Activated T-helper 1 cell treated with anti-CD3 and anti-CD28 coated beads, Interleukin-12 subunit alpha, Interleukin-12 subunit beta, Interleukin-2, Interleukin-4 antibody, amounts not matched to agents 30 ng/mL and 10 ng/mL and 1 ng/mL, durations not matched to agents 14 hours and 24 hours and 36 hours (primary cell): ENCODE measurements at regions of chr10 and their contacts with region 1.

Region 1: GRCh38 chr10:73625884-73626752 is 15.2 kb downstream of the MYOZ1 start:
- DNase-seq: peak; percentile 90
- H3K4me3 Mint-ChIP-seq: peak overlapping the region; percentile 94
- H3K27ac Mint-ChIP-seq: peak overlapping the region; percentile 95
- H3K4me1 Mint-ChIP-seq: peaks cover 17% of the 10 kb centered on the region
- H3K27me3 Mint-ChIP-seq: no peaks in the 10 kb centered on the region

Region 2: DNA sequence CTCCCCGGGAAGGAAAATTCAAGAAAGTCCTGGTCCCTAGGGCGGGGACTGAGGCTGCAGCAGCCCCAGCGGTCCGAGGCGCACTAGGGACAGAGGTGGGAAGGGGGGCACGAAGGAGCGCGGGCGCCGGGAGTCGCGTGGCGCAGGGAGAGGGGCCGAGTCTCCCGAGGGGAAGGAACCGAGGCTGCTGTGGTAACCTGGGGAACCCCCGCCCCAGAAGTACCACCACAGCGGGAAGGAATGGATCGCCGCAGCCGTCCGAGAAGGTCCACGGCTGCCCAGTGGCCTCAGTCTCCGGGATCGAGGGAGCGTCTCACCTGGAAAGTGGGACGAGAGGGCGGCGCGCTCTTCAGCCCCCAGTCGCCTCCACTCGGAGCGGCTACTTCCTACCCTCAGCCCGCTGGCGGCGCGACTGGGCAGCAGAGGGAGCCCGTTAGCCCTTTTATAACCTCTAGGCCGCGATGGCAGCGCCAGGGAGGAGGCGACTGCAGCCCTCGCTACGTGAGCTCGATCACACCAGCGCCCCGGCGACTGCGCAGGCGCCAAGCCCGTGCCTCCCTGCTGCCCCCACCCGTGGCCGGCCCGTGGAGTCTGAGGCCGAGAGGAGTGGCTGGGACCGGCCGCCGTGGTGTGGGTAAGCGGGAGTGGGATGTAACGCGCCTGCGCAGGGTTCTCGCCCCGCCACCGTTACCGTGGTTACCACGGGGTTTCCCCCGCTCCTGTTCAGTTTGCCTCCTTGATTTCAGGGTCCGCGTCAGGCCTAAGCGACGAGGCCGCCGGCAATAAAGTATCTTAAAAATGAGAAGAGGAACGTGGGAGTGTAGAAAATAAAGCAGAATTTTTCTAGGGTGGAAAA is 529.4 kb before region 1 on chr10 and contains the start of gene P4HA1:
- intact Hi-C with region 1: loop called (anchors 1 kb)
- DNase-seq: peak; percentile 97
- H3K4me3 Mint-ChIP-seq: peak within 1 kb of the TSS; percentile 96
- H3K27ac Mint-ChIP-seq: peak within 1 kb of the TSS; percentile 94
- H3K4me1 Mint-ChIP-seq: peaks cover 46% of the 10 kb centered on the region
- H3K27me3 Mint-ChIP-seq: peaks cover 2% of the 10 kb centered on the region
- total RNA-seq, gene P4HA1: 52.8 and 54.5 TPM in 2 replicates

Region 3: DNA sequence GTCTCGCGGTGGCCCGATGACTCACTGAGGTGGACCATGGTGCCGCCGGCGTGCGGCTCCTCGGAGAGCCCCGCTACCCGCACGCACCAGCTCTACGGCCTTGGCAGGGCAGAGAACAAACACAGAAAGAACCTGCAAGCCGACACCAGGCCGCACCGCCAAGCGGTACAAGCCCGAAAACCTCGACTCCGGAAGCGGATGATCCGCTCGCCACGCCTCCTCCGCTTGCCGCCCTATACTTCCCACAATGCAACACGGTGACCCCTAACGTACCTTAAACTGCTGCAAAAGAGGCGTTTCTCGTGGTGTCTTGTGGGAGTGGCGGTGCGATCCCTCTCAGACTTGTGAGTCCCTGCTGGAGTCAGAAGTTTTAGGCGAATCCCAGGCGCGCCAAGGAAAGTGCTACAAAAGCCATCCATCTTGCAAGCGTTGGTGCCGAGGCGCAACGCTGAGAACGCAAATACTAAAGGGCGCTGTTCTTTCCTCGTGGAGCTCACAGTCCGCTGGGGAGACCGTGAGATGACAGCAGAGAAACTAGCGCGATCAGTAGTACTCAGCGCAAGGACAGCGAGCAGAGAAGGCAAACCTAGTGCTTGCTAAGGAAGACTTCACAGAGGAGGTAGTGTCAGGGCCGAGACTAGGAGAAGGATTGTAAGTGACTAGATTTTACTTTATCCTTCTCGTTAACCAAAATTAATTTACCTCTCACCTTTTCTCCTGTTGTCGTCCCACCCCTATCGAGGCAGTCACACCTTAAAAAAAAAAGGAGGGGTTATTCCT is 373.5 kb before region 1 on chr10 and contains the start of gene MRPS16:
- intact Hi-C with region 1: loop called (anchors 1 kb)
- DNase-seq: peak; percentile 92
- H3K4me3 Mint-ChIP-seq: peak within 1 kb of the TSS; percentile 97
- H3K27ac Mint-ChIP-seq: peak within 1 kb of the TSS; percentile 95
- H3K4me1 Mint-ChIP-seq: peaks cover 40% of the 10 kb centered on the region
- H3K27me3 Mint-ChIP-seq: no peaks in the 10 kb centered on the region
- total RNA-seq, gene MRPS16: 158 and 160 TPM in 2 replicates

Region 4: GRCh38 chr10:73529089-73529832 is 96.9 kb before region 1 on chr10:
- intact Hi-C with region 1: loop called (anchors 1 kb)
- DNase-seq: peak; percentile 44
- H3K4me3 Mint-ChIP-seq: no peak overlapping the region
- H3K27ac Mint-ChIP-seq: no peak overlapping the region
- H3K4me1 Mint-ChIP-seq: no peaks in the 10 kb centered on the region
- H3K27me3 Mint-ChIP-seq: peaks cover 2% of the 10 kb centered on the region

Region 5: GRCh38 chr10:73743905-73744663 is 118.0 kb after region 1 on chr10 and contains the start of gene SEC24C:
- intact Hi-C with region 1: loop called (anchors 1 kb)
- DNase-seq: peak; percentile 93
- H3K4me3 Mint-ChIP-seq: peak within 1 kb of the TSS; percentile 97
- H3K27ac Mint-ChIP-seq: peak within 1 kb of the TSS; percentile 98
- H3K4me1 Mint-ChIP-seq: peaks cover 32% of the 10 kb centered on the region
- H3K27me3 Mint-ChIP-seq: no peaks in the 10 kb centered on the region
- total RNA-seq, gene SEC24C: 112 and 114 TPM in 2 replicates

Region 6: GRCh38 chr10:73879296-73880173 is 253.4 kb after region 1 on chr10:
- intact Hi-C with region 1: loop called (anchors 5 kb)
- DNase-seq: peak; percentile 90
- H3K4me3 Mint-ChIP-seq: no peak overlapping the region
- H3K27ac Mint-ChIP-seq: peak overlapping the region; percentile 53
- H3K4me1 Mint-ChIP-seq: peaks cover 53% of the 10 kb centered on the region
- H3K27me3 Mint-ChIP-seq: peaks cover 16% of the 10 kb centered on the region